Naive thymus-derived CD4-positive, alpha-beta T cell (primary cell): ENCODE measurements at regions of chr14 and their contacts with region 1.

Region 1: DNA sequence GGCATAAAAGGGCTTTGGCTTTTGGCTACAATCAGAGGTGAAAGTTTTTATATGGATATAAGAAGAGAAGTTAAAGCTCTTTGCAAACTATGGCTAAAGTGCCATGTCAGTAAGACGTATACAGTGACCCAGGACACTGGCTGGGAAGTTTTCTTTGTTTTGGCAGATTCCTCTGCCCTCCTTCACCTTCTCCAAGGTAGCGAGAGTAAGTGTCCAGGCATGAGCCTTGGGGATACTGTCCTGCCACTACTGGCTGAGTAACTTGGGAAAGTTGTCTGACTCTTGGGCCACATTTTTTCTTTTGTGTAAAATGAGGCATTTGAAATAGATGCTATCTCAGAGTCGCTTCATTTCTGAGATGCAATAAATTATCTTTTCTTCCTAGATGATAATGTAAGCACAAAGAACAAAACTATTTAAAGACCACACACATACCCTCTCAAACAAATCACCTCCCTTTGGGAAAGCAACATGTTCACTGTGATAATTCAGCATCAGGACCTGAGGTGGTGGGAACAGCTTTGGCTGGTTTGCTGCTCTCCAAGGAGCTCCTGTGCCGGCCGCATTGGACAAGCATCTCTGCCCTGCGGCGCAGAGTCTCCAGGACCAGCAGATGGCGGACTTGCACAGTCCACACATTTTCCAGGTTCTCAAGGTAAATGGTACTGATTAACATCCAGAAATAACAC is 106.3 kb downstream of the PTCSC3 start:
- DNase-seq: no peak
- ATAC-seq: no peak
- H3K4me3 ChIP-seq: no peak overlapping the region
- H3K4me3 Mint-ChIP-seq: no peak overlapping the region
- H3K27ac ChIP-seq: no peak overlapping the region
- H3K27ac Mint-ChIP-seq: no peak overlapping the region
- H3K4me1 ChIP-seq: no peaks in the 10 kb centered on the region
- H3K4me1 Mint-ChIP-seq: peaks cover 0 to 4% (median 0%) of the 10 kb centered on the region in 7 donors
- H3K27me3 ChIP-seq: no peaks in the 10 kb centered on the region
- H3K27me3 Mint-ChIP-seq: peaks cover 20 to 52% (median 31%) of the 10 kb centered on the region in 5 donors

Region 2: DNA sequence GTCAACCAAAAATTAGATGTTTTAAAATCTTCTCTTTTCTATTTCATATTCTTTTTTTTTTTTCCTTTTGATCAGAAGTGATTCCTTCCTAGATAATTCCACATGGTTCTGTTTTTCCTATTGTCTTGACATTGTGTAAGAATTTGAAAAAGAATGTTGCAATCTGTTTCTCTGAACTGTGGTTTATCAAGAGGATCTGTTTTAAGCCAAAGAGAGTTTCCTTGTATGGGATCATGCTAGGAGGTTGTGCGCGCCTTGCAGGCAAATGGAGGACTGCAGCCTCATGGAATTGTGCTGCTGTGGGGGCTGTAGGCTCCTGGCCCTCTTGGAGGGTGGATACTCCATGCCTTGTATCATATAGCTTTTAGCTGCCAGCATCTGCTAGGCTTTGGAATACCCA is 293.5 kb after region 1 on chr14:
- CTCF ChIA-PET with region 1: no interaction called
- POLR2A ChIA-PET with region 1: no interaction called
- intact Hi-C with region 1: no loop called
- DNase-seq: no peak
- ATAC-seq: no peak
- H3K4me3 ChIP-seq: no peak overlapping the region
- H3K4me3 Mint-ChIP-seq: no peak overlapping the region
- H3K27ac ChIP-seq: no peak overlapping the region
- H3K27ac Mint-ChIP-seq: no peak overlapping the region
- H3K4me1 ChIP-seq: no peaks in the 10 kb centered on the region
- H3K4me1 Mint-ChIP-seq: no peaks in the 10 kb centered on the region
- H3K27me3 ChIP-seq: no peaks in the 10 kb centered on the region
- H3K27me3 Mint-ChIP-seq: peaks cover 0 to 19% (median 7%) of the 10 kb centered on the region in 5 donors

Region 3: GRCh38 chr14:36373982-36374673 is 304.0 kb after region 1 on chr14:
- CTCF ChIA-PET with region 1: interaction called, 4 read pairs
- POLR2A ChIA-PET with region 1: no interaction called
- intact Hi-C with region 1: loop called (anchors 1 kb)
- DNase-seq: peak; percentile 33 to 66 (median 57)
- ATAC-seq: peak; percentile 92
- H3K4me3 ChIP-seq: no peak overlapping the region
- H3K4me3 Mint-ChIP-seq: no peak overlapping the region
- H3K27ac ChIP-seq: no peak overlapping the region
- H3K27ac Mint-ChIP-seq: no peak overlapping the region
- H3K4me1 ChIP-seq: no peaks in the 10 kb centered on the region
- H3K4me1 Mint-ChIP-seq: peaks cover 0 to 3% (median 0%) of the 10 kb centered on the region in 7 donors
- H3K27me3 ChIP-seq: no peaks in the 10 kb centered on the region
- H3K27me3 Mint-ChIP-seq: peaks cover 0 to 7% (median 2%) of the 10 kb centered on the region in 5 donors